Body of pancreas (tissue), 4 donors: ENCODE measurements at regions of chr18 and their contacts with region 1.

Region 1: DNA sequence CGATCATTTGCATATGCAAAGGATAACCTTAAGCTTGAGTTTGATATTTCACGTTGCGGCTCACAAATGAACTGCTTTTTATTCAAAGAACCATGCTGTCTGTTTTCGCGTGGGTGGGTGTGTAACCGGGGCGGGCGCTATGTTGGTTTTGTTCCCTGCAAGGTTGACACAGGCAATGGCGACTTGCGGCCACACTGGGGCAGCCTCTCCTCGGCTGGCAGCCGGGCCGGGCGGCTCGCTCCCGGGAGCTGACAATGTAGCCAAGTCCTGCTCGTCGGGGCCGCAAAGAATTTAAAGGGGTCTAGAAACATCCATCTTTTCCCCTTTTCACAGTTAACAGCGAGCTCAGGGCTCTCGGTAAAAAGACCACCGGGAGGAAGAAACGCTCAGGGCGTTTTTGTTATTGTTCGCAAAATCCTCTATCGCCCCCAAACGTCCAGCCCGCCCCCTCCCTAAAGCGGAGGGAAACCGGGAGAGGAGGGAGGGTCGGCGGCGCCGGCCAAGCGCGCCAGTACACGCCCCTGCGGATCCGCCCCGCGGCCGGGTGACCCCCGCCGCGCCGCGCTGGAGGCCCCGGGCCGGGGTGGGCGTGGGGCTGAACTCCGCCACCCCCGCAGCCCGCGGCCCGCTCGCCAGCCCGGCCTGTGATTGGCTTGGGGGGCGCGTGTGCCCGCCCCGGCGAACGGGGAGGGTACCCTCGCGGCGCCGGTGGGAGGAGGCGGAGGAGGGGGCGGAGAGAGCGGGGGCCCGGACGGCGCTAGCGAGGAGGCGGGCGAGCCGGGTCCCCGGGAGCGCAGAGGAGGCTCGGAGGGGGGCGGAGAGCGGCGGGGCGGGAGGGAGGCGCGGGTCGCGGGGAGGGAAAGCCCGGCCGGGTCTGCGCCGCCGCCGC is at the start of gene NEDD4L:
- DNase-seq: peak; percentile 87 to 89 (median 88)
- ATAC-seq: peak; percentile 77
- H3K4me3 ChIP-seq: peak within 1 kb of the TSS; percentile 75 to 92
- H3K27ac ChIP-seq: peak within 1 kb of the TSS; percentile 75 to 97 (median 94)
- H3K4me1 ChIP-seq: peaks cover 27% of the 10 kb centered on the region
- H3K27me3 ChIP-seq: no peaks in the 10 kb centered on the region
- CTCF ChIP-seq: peak; percentile 84 to 95 (median 93)
- POLR2A ChIP-seq: peak in 2 of 3 donors; percentile 28 to 36
- total RNA-seq, gene NEDD4L: 105 to 108 TPM

Region 2: DNA sequence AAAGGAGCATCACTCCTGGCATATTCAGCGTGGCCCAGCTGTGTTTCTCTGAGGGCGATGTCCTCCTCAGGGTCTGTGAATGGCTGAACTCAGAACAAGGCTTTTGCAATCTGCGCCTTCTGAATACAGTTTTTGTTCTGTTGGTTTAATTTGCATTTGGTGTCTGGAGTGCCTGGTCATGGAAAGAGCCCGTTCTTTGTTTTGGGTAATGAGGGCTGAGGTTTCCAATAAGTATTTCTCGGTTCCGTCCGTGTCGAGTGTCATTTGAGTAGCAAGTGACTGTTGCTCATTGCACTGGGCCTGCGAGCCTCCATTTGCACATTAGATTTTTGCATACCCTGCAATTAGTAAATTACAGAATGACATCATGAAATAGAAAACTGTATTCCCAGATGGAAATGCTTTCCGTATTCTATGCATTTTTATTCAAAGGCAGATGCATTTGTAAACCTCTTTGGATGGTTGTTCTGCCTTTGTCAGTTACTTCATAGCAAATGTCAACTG is 57.6 kb after region 1 on chr18:
- intact Hi-C with region 1: no loop called
- DNase-seq: no peak
- ATAC-seq: no peak
- H3K4me3 ChIP-seq: no peak overlapping the region
- H3K27ac ChIP-seq: no peak overlapping the region
- H3K4me1 ChIP-seq: peaks cover 85% of the 10 kb centered on the region
- H3K27me3 ChIP-seq: no peaks in the 10 kb centered on the region
- CTCF ChIP-seq: no peak
- POLR2A ChIP-seq: no peak

Region 3: GRCh38 chr18:58117786-58118403 is 74.2 kb after region 1 on chr18:
- intact Hi-C with region 1: loop called (anchors 2 kb)
- DNase-seq: peak; percentile 77 to 94 (median 86)
- ATAC-seq: peak; percentile 98
- H3K4me3 ChIP-seq: no peak overlapping the region
- H3K27ac ChIP-seq: peak overlapping the region; percentile 80 to 92 (median 84)
- H3K4me1 ChIP-seq: peaks cover 53% of the 10 kb centered on the region
- H3K27me3 ChIP-seq: no peaks in the 10 kb centered on the region
- CTCF ChIP-seq: no peak
- POLR2A ChIP-seq: peak in 1 of 3 donors; percentile 27